ENCODE measurements at regions of chr1 and their contacts with region 1.

Region 1: DNA sequence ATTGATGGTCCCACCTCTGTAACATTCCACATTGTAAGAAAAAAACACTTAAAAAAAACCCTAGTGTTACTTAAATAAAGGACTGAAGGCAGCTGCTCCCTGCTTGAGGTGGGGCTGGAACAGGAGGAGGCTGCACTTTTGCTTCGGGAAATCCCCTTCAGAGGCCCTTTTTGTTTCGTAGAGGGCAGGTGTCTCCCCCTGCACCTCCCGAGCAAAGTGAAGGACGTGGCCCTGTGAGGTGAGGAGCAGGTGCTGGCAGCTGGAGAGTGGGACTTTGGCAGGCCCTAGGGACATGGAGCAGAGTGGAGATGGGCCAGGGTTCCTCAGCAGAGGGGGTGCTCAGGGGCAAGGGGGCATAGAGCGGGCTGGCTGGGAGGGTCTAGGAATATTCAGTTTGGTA is 33.4 kb upstream of the WNT4 start:
- DNase-seq: peak; percentile 31
- ATAC-seq: peak; percentile 85
- H3K4me3 Mint-ChIP-seq: peak overlapping the region; percentile 80
- H3K27ac Mint-ChIP-seq: peak overlapping the region; percentile 92
- H3K4me1 Mint-ChIP-seq: peaks cover 43% of the 10 kb centered on the region
- H3K27me3 Mint-ChIP-seq: no peaks in the 10 kb centered on the region
- CTCF ChIP-seq: no peak

Region 2: GRCh38 chr1:22143065-22144036 is 32.9 kb before region 1 on chr1 and contains the start of gene WNT4:
- CTCF ChIA-PET with region 1: no interaction called
- POLR2A ChIA-PET with region 1: interaction called, 5 read pairs
- intact Hi-C with region 1: loop called (anchors 2 kb)
- DNase-seq: peak; percentile 48
- ATAC-seq: peak; percentile 81
- H3K4me3 Mint-ChIP-seq: peak within 1 kb of the TSS; percentile 83
- H3K27ac Mint-ChIP-seq: no peak within 1 kb of the TSS
- H3K4me1 Mint-ChIP-seq: peaks cover 12% of the 10 kb centered on the region
- H3K27me3 Mint-ChIP-seq: peaks cover 43% of the 10 kb centered on the region
- CTCF ChIP-seq: no peak
- total RNA-seq, gene WNT4: 6.5 and 7.9 TPM in 2 replicates

Region 3: DNA sequence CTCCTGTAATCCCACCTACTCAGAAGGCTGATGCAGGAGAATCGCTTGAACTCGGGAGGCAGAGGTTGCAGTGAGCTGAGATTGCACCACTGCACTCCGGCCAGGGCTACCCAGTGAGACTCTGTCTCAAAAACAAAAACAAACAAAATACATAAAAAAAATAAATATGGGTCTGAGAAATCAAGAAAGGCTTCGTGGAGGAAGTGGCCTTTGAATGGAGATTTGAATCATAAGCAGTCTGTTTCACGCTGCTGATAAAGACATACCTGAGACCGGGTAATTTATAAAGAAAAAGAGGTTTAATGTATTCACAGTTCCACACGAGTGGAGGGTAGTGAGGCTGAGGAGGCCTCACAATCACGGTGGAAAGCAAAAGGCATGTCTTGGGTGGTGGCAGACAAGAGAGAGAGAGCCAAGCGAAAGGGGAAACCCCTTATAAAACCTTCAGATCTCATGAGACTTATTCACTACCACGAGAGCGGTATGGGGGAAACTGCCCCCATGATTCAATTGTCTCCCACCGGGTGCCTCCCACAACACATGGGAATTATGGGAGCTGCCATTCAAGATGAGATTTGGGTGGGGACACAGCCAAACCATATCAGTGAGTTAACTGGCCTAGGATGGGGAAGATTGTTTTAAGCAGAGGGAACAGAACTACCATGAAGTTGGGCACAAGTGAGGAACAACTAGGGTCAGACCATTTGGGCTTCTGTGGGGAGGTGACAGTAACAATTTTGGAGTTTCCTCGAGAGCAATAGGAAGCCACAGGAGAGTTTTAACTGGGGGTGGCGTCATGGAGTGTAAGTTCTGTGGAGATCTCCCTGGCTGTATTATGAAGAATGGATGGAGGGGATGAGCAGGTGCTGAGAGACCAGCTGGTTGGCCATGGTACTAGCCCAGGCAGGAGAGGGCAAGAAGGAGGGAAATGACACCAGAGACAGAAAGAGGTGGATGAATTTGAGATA is 11.1 kb before region 1 on chr1:
- CTCF ChIA-PET with region 1: no interaction called
- POLR2A ChIA-PET with region 1: interaction called, 4 read pairs
- intact Hi-C with region 1: loop called (anchors 1 kb)
- DNase-seq: no peak
- ATAC-seq: peak; percentile 88
- H3K4me3 Mint-ChIP-seq: peak overlapping the region; percentile 8
- H3K27ac Mint-ChIP-seq: peak overlapping the region; percentile 79
- H3K4me1 Mint-ChIP-seq: peaks cover 36% of the 10 kb centered on the region
- H3K27me3 Mint-ChIP-seq: no peaks in the 10 kb centered on the region
- CTCF ChIP-seq: no peak

Region 4: DNA sequence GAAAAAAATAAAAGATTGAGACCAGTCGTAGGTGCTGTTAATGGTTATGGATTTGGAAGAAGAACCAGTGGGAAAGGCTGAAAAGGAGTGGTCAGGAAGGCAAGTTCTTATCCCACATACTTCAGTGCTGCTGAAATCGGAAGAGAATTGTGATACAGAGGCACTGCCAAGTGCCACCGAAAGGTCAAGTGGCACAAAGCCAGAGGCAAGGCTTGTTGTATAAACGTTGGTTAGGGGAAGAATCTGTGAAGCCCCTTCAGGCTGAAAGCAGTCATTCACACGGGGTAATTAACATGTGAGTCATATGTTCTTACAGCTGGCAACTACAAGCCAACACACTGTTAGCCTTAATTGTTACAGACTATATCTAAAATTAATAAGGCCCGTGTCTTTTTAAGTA is 324.2 kb after region 1 on chr1:
- CTCF ChIA-PET with region 1: no interaction called
- POLR2A ChIA-PET with region 1: no interaction called
- intact Hi-C with region 1: no loop called
- DNase-seq: no peak
- ATAC-seq: no peak
- H3K4me3 Mint-ChIP-seq: no peak overlapping the region
- H3K27ac Mint-ChIP-seq: no peak overlapping the region
- H3K4me1 Mint-ChIP-seq: no peaks in the 10 kb centered on the region
- H3K27me3 Mint-ChIP-seq: no peaks in the 10 kb centered on the region
- CTCF ChIP-seq: no peak